PC-3 (cell line): ENCODE measurements at regions of chr1 and their contacts with region 1.

Region 1: GRCh38 chr1:212678456-212679410 is 20.9 kb downstream of the BATF3 start:
- DNase-seq: no peak
- ATAC-seq: no peak
- H3K4me3 ChIP-seq: no peak overlapping the region
- H3K27ac ChIP-seq: no peak overlapping the region
- H3K4me1 ChIP-seq: no peaks in the 10 kb centered on the region
- H3K27me3 ChIP-seq: peaks cover under 1% of the 10 kb centered on the region; the same call in 1 of the 2 replicates
- CTCF ChIP-seq: no peak

Region 2: DNA sequence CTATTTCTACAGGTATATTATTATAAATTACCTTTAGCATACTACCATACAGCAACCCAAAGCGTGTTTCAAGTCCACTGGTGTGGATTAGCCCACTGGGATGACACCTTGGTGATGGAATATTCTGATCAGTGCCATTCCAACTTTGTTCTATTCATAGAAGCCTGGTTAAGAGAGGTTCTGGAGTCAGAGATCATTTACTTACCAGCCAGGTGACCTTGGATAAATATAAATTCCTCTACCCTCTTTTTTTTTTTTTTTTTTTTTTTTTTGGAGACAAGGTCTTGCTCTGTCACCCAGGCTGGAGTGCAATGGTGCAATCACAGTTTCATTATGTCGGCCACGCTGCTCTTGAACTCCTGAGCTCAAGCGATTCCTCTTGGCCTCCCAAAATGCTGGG is 168.8 kb after region 1 on chr1 and contains the start of gene SPATA45:
- CTCF ChIA-PET with region 1: no interaction called
- POLR2A ChIA-PET with region 1: interaction called, 11 read pairs
- intact Hi-C with region 1: no loop called
- DNase-seq: no peak
- ATAC-seq: no peak
- H3K4me3 ChIP-seq: no peak within 1 kb of the TSS
- H3K27ac ChIP-seq: no peak within 1 kb of the TSS
- H3K4me1 ChIP-seq: no peaks in the 10 kb centered on the region
- H3K27me3 ChIP-seq: no peaks in the 10 kb centered on the region
- CTCF ChIP-seq: no peak
- total RNA-seq, gene SPATA45: not detected in 2 replicates